ENCODE measurements at regions of chr2 and their contacts with region 1.

Region 1: DNA sequence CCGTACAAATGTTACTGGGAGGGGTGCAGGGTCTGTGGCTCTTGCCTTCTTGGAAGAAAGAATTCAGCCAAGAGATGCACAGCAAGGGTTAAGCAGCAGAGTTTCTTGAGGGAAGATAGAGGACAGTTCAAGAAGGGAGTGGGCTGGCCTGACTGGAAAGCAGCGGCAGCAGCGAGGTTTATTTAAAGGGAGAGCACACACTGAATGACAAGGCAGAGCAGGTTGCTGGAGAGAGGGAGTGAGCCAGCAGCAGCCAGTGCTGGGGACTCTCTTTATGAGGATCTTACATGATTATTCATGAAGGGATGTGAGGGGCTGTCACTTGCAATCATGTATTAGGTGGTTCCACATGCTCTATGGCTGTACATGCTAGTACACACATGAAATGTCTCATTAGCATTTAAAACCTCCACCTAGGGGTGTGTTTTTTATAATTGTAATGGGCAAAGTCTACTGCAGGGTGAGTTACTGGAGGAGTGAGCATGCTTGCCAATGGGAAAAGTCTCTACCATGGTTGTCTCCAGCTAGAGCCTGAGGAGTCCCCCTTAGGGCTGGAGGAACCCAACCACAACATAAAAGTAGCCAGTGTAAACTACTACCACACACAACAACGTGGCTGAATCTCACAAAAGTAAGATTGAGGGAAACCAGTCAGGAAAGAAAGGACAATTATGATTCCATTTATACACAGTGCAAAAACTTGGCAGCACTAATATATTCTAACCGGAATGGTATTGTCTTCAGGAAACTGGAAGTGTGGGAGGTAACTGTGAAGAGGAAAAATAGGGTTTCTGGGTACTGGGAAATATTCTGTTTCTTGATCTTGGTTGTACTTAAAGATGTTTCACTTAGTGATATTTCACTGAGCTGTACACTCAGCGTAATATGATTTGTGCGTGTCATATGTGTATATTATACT is 87.6 kb upstream of the FAM110C start:
- DNase-seq: peak; percentile 18
- H3K4me3 Mint-ChIP-seq: no peak overlapping the region
- H3K27ac Mint-ChIP-seq: no peak overlapping the region
- H3K4me1 Mint-ChIP-seq: no peaks in the 10 kb centered on the region
- H3K27me3 Mint-ChIP-seq: no peaks in the 10 kb centered on the region
- CTCF ChIP-seq: no peak

Region 2: DNA sequence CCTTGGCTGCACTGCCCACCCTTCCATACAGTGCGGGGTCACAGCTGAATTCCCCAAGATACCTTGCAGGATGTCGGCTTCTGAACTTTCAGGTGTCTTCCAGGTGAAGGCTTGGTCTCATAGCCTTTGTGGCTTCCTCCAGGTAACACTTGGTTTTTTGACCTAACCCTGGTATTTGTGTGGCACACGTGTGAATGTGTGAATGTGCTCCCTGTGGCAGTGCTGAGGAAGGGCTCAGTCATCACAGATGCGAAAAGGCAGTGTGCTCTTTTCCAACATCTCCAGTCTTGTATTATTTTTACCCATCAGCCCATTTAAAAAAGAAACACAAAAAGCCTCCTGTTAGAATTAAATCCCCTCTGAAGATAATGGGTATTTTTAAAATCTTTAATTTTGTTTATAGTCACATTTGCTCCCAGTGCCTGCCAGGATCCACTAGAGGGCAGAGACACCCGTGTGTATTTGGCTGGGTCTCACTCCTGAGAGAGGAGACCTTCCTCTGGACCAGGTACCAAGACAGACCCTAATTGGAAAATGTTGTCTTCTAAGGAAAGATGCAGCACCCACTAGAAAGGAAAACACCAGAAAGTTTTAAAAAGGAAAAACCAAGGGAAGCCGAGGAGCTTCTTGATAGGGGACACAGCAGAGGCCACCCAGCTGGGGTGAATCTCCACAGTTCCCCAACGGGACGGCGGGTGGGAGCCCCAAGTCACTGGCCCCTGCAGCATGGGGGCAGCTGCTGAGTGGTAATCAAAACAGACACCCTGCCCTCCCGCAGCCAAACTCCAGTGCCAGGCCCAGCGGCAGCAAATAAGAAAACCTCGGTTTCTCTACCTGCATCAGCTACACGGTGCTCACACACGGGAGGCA is 115.3 kb before region 1 on chr2:
- CTCF ChIA-PET with region 1: interaction called, 298 read pairs
- POLR2A ChIA-PET with region 1: interaction called, 18 read pairs
- intact Hi-C with region 1: no loop called
- DNase-seq: peak; percentile 46
- H3K4me3 Mint-ChIP-seq: no peak overlapping the region
- H3K27ac Mint-ChIP-seq: no peak overlapping the region
- H3K4me1 Mint-ChIP-seq: peaks cover 9% of the 10 kb centered on the region
- H3K27me3 Mint-ChIP-seq: no peaks in the 10 kb centered on the region
- CTCF ChIP-seq: peak; percentile 74

Region 3: DNA sequence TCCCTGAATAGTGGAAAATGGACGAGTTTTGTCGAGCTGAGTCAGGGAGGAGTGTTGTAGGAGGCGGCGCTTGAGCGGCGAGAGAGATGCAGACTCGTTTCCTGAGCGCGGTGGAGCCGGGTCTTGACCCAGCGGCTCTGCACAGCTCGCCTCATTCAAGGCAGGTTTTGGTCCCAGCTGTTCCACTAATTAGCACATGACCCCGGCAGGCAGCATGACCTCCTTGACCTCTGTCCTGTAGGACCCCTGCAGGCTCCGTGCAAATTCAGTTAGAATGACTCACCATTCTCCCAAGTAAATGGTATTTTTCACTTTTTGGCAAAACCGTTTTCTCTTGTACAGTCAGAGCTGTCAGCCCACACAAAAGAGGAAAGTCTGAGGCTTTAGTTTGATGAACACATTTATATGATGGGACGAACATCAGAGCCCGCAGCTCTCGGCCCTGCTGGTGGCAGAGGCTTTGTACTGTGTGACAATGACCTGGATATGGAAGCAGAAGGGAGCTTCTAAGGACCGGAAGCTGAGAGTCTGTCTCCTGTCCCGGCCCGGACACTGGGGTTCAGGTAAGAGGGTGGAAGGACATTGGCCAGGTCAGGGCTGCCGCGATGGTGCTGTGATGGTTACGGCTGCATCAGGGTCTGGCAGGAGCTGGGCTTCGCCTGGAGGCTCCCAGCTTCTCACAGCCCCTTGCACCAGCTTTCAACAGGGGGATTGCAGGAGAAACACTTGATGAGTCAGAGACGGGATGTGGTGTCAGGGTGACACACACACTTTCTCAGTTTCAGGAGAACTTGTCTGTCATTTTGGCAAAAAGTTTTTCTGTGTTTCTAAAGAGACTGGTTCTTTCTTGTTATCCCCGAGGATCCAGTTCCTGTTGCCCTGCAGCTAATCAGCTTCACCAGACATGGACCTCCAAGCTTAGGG is 183.8 kb after region 1 on chr2:
- CTCF ChIA-PET with region 1: no interaction called
- POLR2A ChIA-PET with region 1: no interaction called
- intact Hi-C with region 1: no loop called
- DNase-seq: no peak
- H3K4me3 Mint-ChIP-seq: no peak overlapping the region
- H3K27ac Mint-ChIP-seq: no peak overlapping the region
- H3K4me1 Mint-ChIP-seq: no peaks in the 10 kb centered on the region
- H3K27me3 Mint-ChIP-seq: no peaks in the 10 kb centered on the region
- CTCF ChIP-seq: no peak

Measured in MCF 10A (cell line).